CD8-positive, alpha-beta T cell (primary cell): ENCODE measurements at regions of chr19 and their contacts with region 1.

Region 1: DNA sequence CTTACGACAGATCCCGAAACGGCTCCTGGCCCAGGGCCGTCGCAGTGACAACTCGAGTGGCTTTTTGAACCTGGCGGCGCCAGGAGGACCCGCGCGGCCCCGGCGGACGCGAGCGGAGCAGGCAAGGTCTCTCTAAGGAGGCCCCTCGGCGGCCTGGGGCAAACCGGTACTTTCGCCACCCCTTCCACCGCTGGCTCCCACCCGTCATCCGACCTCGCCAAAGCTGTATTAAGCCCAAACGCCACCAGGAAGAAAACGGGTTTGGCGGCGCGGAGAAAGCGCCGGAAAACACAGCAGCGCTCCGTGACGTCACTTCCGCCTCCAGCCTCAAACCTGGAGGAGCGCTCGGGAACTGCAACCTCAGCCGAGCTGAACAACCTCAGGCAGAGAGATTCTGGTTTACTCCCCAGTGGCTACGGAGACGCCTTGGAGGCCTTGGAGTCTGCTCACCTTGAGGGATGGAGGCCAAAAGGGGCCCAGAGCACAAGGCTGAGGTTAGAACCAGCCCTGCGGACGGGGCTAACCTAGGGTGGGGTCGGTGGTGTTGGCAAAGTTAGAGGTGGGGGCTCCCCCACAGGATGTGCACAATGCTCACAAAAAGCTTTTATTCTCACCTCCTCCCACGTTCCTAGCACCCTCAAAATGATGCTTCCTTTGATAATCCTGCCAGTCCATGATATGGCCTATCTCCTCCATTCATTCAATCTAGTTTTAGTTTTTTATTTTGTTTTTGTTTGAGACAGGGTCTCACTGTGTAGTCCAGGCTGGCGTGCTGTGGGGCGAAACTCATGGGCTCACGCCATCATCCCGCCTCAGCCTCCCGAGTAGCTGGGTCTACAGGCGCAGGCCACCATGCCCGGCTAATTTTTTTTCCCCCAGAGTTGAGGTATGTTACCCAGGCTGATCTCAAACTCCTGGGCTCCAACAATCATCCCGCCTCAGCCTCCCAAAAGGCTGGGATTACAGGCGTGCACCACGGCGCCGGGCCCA is at the start of gene ZNF266:
- DNase-seq: peak; percentile 87 to 97 (median 93)
- ATAC-seq: peak; percentile 87
- H3K4me3 ChIP-seq: peak within 1 kb of the TSS; percentile 80 to 95
- H3K4me3 Mint-ChIP-seq: peak within 1 kb of the TSS; percentile 93
- H3K27ac ChIP-seq: peak within 1 kb of the TSS; percentile 81 to 98
- H3K27ac Mint-ChIP-seq: peak within 1 kb of the TSS; percentile 98
- H3K4me1 ChIP-seq: peaks cover 31% of the 10 kb centered on the region
- H3K4me1 Mint-ChIP-seq: peaks cover 56% of the 10 kb centered on the region
- H3K27me3 ChIP-seq: no peaks in the 10 kb centered on the region
- H3K27me3 Mint-ChIP-seq: no peaks in the 10 kb centered on the region
- CTCF ChIP-seq: peak; percentile 67
- total RNA-seq, gene ZNF266: 62.2 to 65.3 TPM

Region 2: GRCh38 chr19:8444645-8445487 is 990.7 kb before region 1 on chr19 and contains the start of gene HNRNPM:
- CTCF ChIA-PET with region 1: no interaction called
- POLR2A ChIA-PET with region 1: no interaction called
- intact Hi-C with region 1: loop called in 1 of 2 experiments (anchors 10 kb)
- DNase-seq: peak; percentile 99 to 100 (median 100)
- ATAC-seq: peak; percentile 93
- H3K4me3 ChIP-seq: peak within 1 kb of the TSS; percentile 69 to 81
- H3K4me3 Mint-ChIP-seq: peak within 1 kb of the TSS; percentile 97
- H3K27ac ChIP-seq: peak within 1 kb of the TSS; percentile 93 to 96
- H3K27ac Mint-ChIP-seq: peak within 1 kb of the TSS; percentile 98
- H3K4me1 ChIP-seq: peaks cover 34% of the 10 kb centered on the region
- H3K4me1 Mint-ChIP-seq: peaks cover 40% of the 10 kb centered on the region
- H3K27me3 ChIP-seq: no peaks in the 10 kb centered on the region
- H3K27me3 Mint-ChIP-seq: no peaks in the 10 kb centered on the region
- CTCF ChIP-seq: no peak
- total RNA-seq, gene HNRNPM: 268 to 278 TPM

Region 3: GRCh38 chr19:9205501-9206113 is 230.0 kb before region 1 on chr19:
- CTCF ChIA-PET with region 1: interaction called, 7 read pairs
- POLR2A ChIA-PET with region 1: interaction called, 3 read pairs
- intact Hi-C with region 1: loop called (anchors 1 kb)
- DNase-seq: peak; percentile 32 to 79 (median 65)
- ATAC-seq: peak; percentile 71
- H3K4me3 ChIP-seq: peak overlapping the region in 1 of 2 experiments; percentile 32
- H3K4me3 Mint-ChIP-seq: peak overlapping the region; percentile 60
- H3K27ac ChIP-seq: no peak overlapping the region
- H3K27ac Mint-ChIP-seq: no peak overlapping the region
- H3K4me1 ChIP-seq: no peaks in the 10 kb centered on the region
- H3K4me1 Mint-ChIP-seq: peaks cover 6% of the 10 kb centered on the region
- H3K27me3 ChIP-seq: no peaks in the 10 kb centered on the region
- H3K27me3 Mint-ChIP-seq: peaks cover 8% of the 10 kb centered on the region
- CTCF ChIP-seq: peak; percentile 98

Region 4: GRCh38 chr19:9323919-9324583 is 111.5 kb before region 1 on chr19 and contains the start of gene ZNF559:
- CTCF ChIA-PET with region 1: no interaction called
- POLR2A ChIA-PET with region 1: interaction called, 13 read pairs
- intact Hi-C with region 1: loop called (anchors 1 kb)
- DNase-seq: peak; percentile 95 to 99 (median 98)
- ATAC-seq: peak; percentile 95
- H3K4me3 ChIP-seq: peak within 1 kb of the TSS; percentile 75 to 78
- H3K4me3 Mint-ChIP-seq: peak within 1 kb of the TSS; percentile 88
- H3K27ac ChIP-seq: peak within 1 kb of the TSS; percentile 62 to 83
- H3K27ac Mint-ChIP-seq: peak within 1 kb of the TSS; percentile 87
- H3K4me1 ChIP-seq: peaks cover 12% of the 10 kb centered on the region
- H3K4me1 Mint-ChIP-seq: peaks cover 38% of the 10 kb centered on the region
- H3K27me3 ChIP-seq: no peaks in the 10 kb centered on the region
- H3K27me3 Mint-ChIP-seq: no peaks in the 10 kb centered on the region
- CTCF ChIP-seq: peak; percentile 39
- total RNA-seq, gene ZNF559: 4.0 to 4.5 TPM

Region 5: GRCh38 chr19:9584073-9584833 is 148.7 kb after region 1 on chr19 and contains the start of gene ZNF121:
- CTCF ChIA-PET with region 1: no interaction called
- POLR2A ChIA-PET with region 1: interaction called, 4 read pairs
- intact Hi-C with region 1: loop called (anchors 1 to 2 kb)
- DNase-seq: peak; percentile 57 to 89 (median 81)
- ATAC-seq: peak; percentile 75
- H3K4me3 ChIP-seq: peak within 1 kb of the TSS; percentile 95 to 98
- H3K4me3 Mint-ChIP-seq: peak within 1 kb of the TSS; percentile 95
- H3K27ac ChIP-seq: peak within 1 kb of the TSS; percentile 96 to 97
- H3K27ac Mint-ChIP-seq: peak within 1 kb of the TSS; percentile 95
- H3K4me1 ChIP-seq: peaks cover 21% of the 10 kb centered on the region
- H3K4me1 Mint-ChIP-seq: peaks cover 39% of the 10 kb centered on the region
- H3K27me3 ChIP-seq: no peaks in the 10 kb centered on the region
- H3K27me3 Mint-ChIP-seq: peaks cover 2% of the 10 kb centered on the region
- CTCF ChIP-seq: no peak
- total RNA-seq, gene ZNF121: 40.6 to 43.2 TPM

Region 6: GRCh38 chr19:9768175-9769112 is 332.9 kb after region 1 on chr19 and contains the start of gene ZNF846:
- CTCF ChIA-PET with region 1: no interaction called
- POLR2A ChIA-PET with region 1: interaction called, 4 read pairs
- intact Hi-C with region 1: loop called in 1 of 2 experiments (anchors 2 kb)
- DNase-seq: peak; percentile 83 to 96 (median 93)
- ATAC-seq: peak; percentile 95
- H3K4me3 ChIP-seq: peak within 1 kb of the TSS; percentile 94 to 96
- H3K4me3 Mint-ChIP-seq: peak within 1 kb of the TSS; percentile 97
- H3K27ac ChIP-seq: peak within 1 kb of the TSS; percentile 87 to 99
- H3K27ac Mint-ChIP-seq: peak within 1 kb of the TSS; percentile 99
- H3K4me1 ChIP-seq: peaks cover 8% of the 10 kb centered on the region
- H3K4me1 Mint-ChIP-seq: peaks cover 16% of the 10 kb centered on the region
- H3K27me3 ChIP-seq: no peaks in the 10 kb centered on the region
- H3K27me3 Mint-ChIP-seq: no peaks in the 10 kb centered on the region
- CTCF ChIP-seq: no peak
- total RNA-seq, gene ZNF846: 6.4 to 8.2 TPM